Activated CD4-positive, alpha-beta memory T cell treated with anti-CD3 and anti-CD28 coated beads for 36 hours (primary cell): ENCODE measurements at regions of chr12 and their contacts with region 1.

Region 1: DNA sequence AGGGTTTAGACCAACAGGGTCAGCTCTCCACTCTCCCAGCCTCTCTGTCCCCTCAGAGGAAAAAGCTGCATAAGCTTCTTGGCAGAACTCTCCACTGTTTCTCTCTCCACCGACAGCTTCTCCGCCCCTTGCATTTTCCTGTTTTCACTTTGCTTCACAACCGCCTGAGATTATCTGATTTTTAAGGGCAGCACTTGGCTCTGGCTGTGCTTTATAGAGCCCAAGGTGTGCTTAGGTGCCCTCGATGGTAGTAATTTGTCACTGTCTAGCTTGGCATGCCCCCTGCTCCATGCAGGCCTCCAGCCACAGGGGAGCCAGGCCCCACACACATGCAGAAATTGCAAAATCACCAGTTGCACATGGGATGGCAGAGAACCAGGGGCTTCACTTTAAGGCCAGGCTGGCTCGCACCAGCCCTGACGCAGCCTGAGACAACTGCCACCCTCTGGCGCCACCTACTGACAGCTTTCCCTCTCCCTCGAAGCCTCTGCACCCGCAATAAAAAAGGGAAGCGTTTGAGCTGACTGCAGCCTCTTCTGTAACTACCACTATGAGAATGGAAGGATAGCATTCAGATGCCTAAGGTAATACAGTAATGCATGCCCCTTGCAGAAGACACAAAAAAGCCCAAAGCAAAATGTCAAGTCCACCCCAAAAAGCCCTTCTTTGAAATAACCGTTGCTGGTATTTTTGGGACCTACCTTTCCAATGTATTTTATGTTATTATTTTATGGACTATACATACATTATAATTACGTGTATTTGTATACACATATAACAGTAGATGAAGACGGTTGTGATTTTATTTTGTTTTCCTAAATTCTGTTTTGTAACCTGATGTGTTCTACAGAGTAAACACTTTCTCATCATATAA is 32.0 kb upstream of the RIMBP2 start:
- DNase-seq: peak; percentile 83
- H3K4me3 Mint-ChIP-seq: no peak overlapping the region
- H3K27ac Mint-ChIP-seq: no peak overlapping the region
- H3K4me1 Mint-ChIP-seq: peaks cover 7% of the 10 kb centered on the region
- H3K27me3 Mint-ChIP-seq: peaks cover 7% of the 10 kb centered on the region

Region 2: DNA sequence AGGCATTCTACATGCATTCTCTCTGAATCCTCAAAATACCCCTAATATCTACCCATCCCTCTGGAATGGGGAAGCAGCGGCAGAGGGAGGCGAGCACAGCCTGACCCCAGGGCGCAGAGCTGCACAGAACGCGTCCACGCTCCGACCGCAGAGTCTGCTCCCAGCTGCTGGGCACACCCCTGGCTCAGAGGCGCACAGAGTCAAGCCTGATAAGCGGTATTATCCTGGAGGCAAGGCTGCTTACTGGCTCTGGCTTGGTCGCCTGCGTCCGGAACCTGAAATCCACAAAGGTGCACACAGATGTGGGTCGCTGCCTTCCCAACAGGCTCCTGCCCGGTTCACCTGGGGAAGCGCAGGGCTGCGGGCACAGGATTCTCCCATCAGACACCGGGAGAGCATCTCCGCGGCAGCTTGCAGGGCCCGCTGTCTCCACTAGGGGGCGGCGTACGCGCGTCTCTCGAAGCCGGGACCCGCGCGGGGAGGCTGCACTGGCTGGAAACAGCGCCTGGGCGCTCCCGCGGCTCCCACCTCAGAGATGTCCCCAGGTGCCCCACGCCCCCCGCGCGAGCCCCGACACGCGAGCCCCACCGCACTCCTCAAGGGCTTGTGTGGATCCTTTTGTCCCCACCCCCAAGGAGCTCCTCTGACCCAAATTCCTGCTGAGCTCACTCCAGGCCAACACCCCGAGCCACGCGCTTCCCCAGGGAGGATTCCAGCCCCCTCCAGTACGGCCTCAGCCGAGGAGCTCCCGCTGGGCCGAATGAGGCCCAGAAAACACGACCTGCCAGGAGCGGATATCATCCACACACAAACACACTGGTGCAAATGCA is 705.9 kb before region 1 on chr12:
- CTCF ChIA-PET with region 1: interaction called, 4 read pairs
- POLR2A ChIA-PET with region 1: no interaction called
- intact Hi-C with region 1: loop called (anchors 1 kb)
- DNase-seq: peak; percentile 66
- H3K4me3 Mint-ChIP-seq: no peak overlapping the region
- H3K27ac Mint-ChIP-seq: no peak overlapping the region
- H3K4me1 Mint-ChIP-seq: no peaks in the 10 kb centered on the region
- H3K27me3 Mint-ChIP-seq: peaks cover 46% of the 10 kb centered on the region

Region 3: DNA sequence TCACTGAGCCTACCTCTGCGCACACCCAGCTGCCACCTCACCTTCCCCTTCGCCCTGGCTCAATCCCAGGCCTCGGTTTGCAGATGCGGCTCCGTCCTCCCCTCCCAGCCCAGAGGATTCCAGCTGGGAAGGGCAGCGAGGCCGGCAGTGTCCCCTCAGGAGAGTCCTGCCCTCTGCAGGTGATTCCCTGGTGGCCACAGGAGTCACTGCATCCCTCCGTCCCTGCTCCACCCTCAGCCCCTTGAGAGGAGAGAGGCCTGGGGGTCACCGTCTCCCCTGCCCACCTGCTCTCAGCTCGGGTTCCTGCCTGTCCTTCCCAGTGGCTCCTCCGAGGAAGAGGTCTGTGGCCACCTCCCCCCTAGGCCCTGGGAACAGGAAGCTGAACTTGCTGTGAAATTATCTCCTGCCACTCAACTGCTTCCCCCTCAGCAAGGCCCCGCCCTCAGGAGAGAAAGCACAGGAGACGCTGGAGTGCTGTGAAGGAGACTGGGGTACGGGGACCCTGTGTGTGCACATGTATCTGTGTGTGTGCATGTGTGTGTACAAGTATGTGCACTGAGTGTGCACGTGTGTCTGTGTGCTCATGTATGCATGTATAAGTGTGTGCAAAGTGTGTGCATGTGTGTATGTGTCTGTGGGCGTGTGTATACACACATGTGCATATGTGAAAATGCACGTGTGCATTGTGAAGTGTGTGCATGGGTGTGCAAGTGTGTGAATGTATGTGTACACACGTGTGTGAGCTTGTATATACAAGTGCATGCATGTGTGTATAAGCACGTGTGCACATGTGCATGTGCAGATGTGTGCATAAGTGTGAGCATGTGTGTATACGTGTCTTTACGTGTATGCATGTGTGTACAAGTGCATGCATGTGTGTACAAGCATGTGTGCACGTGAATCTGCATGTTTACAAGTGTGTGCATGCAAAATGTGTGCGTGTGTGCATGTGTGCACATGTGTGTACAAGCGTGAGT is 1594.4 kb after region 1 on chr12:
- CTCF ChIA-PET with region 1: no interaction called
- POLR2A ChIA-PET with region 1: no interaction called
- intact Hi-C with region 1: no loop called
- DNase-seq: no peak
- H3K4me3 Mint-ChIP-seq: no peak overlapping the region
- H3K27ac Mint-ChIP-seq: no peak overlapping the region
- H3K4me1 Mint-ChIP-seq: no peaks in the 10 kb centered on the region
- H3K27me3 Mint-ChIP-seq: peaks cover 3% of the 10 kb centered on the region